ENCODE measurements at regions of chr4 and their contacts with region 1.

Region 1: DNA sequence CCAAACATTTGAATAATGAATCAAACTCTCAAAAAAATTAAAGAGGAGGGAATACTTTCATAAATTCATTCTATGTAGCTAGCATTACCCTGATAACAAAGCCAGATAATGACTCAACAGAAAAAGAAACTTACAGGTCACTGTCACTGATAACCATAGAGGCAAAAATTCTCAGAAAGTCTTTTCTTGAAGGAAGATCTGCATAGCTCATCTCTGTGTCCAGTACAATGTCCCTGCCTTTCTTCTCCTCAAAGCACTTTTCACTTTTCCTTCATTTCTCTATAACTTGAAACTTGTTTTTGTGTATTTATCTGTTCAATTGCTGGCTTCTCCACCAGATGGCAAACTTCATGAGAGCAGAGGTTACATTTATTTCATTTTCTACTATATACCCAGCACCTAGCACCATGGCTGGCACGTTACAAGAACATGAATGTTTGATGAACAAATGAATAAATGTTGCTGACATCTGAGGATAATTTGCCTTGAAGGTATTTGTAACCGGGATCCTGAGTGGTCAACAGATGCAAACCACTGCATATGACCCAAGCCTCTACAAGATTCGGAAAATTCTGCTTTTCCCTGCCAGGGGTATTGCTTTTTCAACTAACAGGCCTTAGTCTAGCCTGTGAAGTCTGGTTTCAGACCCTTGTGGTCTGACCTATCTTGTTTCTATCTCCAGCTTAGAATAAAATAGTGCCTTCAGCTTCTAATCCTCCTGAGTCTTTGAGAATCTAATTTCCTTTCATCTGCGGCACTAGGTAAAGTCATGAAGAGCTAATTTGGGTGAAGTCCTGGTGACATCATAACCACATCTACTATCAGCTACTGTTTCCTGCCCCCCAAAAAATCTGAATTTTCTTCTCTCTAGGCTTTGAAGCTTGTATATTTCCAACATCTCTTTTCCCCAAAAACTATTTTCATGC is 52.5 kb upstream of the ANTXR2 start:
- DNase-seq: peak; percentile 74
- ATAC-seq: peak; percentile 83
- H3K4me3 ChIP-seq: no peak overlapping the region
- H3K4me3 Mint-ChIP-seq: no peak overlapping the region
- H3K27ac ChIP-seq: no peak overlapping the region
- H3K27ac Mint-ChIP-seq: no peak overlapping the region
- H3K4me1 ChIP-seq: peaks cover 9 to 13% of the 10 kb centered on the region in 2 donors
- H3K4me1 Mint-ChIP-seq: peaks cover 21% of the 10 kb centered on the region
- H3K27me3 ChIP-seq: no peaks in the 10 kb centered on the region
- H3K27me3 Mint-ChIP-seq: no peaks in the 10 kb centered on the region
- CTCF ChIP-seq: peak; percentile 79

Region 2: GRCh38 chr4:78923464-78924312 is 1201.8 kb before region 1 on chr4:
- CTCF ChIA-PET with region 1: no interaction called
- POLR2A ChIA-PET with region 1: no interaction called
- intact Hi-C with region 1: no loop called
- DNase-seq: no peak
- ATAC-seq: no peak
- H3K4me3 ChIP-seq: no peak overlapping the region
- H3K4me3 Mint-ChIP-seq: no peak overlapping the region
- H3K27ac ChIP-seq: no peak overlapping the region
- H3K27ac Mint-ChIP-seq: no peak overlapping the region
- H3K4me1 ChIP-seq: no peaks in the 10 kb centered on the region
- H3K4me1 Mint-ChIP-seq: peaks cover 7% of the 10 kb centered on the region
- H3K27me3 ChIP-seq: no peaks in the 10 kb centered on the region
- H3K27me3 Mint-ChIP-seq: no peaks in the 10 kb centered on the region
- CTCF ChIP-seq: no peak

Region 3: DNA sequence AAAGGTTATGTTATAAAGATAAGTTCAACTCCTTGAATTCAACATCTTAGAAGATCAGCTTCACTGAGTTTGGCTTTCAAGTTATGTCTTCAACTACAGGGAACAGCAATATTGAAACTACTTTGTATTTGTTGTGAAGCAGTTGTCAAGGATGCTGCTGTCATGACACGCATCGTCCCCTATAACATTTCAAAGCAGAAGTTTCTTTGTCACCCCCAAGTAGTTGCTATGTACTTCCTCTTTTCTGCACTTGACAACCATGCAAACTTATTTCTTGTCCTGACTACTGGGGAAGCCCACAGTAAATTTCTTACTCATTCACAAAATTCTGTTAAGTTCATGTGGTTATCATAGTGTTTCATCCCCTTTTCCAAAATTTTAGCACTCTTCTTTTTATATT is 66.8 kb before region 1 on chr4:
- CTCF ChIA-PET with region 1: interaction called, 9 read pairs
- POLR2A ChIA-PET with region 1: no interaction called
- intact Hi-C with region 1: loop called (anchors 1 kb)
- DNase-seq: peak; percentile 94
- ATAC-seq: peak; percentile 93
- H3K4me3 ChIP-seq: peak overlapping the region in 2 of 5 experiments; percentile 10 to 33
- H3K4me3 Mint-ChIP-seq: peak overlapping the region; percentile 79
- H3K27ac ChIP-seq: peak overlapping the region; percentile 91 to 100
- H3K27ac Mint-ChIP-seq: peak overlapping the region; percentile 98
- H3K4me1 ChIP-seq: peaks cover 14 to 17% of the 10 kb centered on the region in 2 donors
- H3K4me1 Mint-ChIP-seq: peaks cover 36% of the 10 kb centered on the region
- H3K27me3 ChIP-seq: no peaks in the 10 kb centered on the region
- H3K27me3 Mint-ChIP-seq: no peaks in the 10 kb centered on the region
- CTCF ChIP-seq: no peak

Region 4: DNA sequence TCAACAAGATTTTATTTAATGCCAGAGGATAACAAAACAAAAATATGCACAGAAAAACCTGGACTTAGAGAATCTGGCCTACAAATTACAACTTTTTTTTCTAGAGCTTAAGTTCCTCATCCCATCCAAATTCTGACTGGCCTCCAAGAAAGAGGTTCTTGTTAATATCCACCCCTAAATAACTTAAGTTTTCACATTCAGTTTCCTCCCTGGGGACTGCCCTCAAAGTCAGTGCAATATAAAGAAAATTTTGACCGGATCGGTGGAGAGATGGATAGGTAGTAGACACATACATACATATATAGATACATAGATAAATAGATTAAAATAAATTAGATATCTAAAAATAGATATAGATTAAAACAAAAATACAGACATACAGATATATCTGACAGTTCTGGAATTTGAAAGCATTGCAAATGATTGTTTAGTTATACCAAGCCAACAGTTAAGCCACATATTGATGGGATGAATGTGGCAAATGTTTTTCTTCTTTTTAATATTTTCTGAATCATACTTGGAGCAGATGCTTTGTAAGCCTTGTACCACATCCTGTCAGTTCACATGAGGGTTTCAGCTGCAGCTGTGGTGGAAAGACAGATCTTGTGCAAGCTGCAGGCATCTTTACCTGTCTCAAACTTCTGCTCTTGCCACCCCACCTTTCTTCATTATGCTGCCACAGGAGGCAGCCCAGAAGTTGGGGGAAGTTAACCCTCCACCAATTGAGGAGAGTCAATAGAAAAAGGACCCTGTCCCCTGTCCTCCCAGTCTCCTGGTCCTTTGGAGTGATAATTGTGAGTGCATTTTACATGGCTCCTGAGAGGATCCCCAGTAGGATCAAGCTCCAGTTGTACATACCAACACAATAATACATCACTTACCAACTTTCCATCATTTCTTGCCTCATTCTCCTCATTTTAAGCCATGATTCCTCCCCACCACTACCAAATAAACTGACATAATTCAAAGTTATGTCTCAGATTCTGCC is 13.3 kb after region 1 on chr4:
- CTCF ChIA-PET with region 1: interaction called, 16 read pairs
- POLR2A ChIA-PET with region 1: no interaction called
- intact Hi-C with region 1: loop called (anchors 2 kb)
- DNase-seq: peak; percentile 39
- ATAC-seq: peak; percentile 66
- H3K4me3 ChIP-seq: no peak overlapping the region
- H3K4me3 Mint-ChIP-seq: peak overlapping the region; percentile 7
- H3K27ac ChIP-seq: no peak overlapping the region
- H3K27ac Mint-ChIP-seq: peak overlapping the region; percentile 34
- H3K4me1 ChIP-seq: peaks cover 12 to 29% of the 10 kb centered on the region in 2 donors
- H3K4me1 Mint-ChIP-seq: peaks cover 35% of the 10 kb centered on the region
- H3K27me3 ChIP-seq: no peaks in the 10 kb centered on the region
- H3K27me3 Mint-ChIP-seq: no peaks in the 10 kb centered on the region
- CTCF ChIP-seq: no peak

Region 5: DNA sequence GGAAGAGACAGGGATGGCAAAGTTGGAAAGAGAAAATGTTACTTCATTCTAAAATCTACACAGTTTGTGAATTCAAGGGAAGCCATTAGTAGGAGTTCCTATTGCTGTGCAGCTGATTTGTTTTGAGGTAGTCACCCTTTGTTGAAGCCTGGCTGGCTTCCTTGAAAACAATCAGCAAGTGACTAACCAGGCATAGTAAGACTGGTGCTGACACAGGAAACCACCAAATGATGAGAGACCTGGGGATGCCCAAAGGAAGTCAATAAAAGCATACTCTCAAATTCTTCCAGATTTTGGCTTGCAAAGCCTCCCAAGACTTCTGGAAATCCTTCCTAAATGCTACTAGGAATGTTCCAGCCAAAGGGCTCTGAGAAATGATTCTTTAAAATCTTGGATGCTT is 47.9 kb after region 1 on chr4:
- CTCF ChIA-PET with region 1: interaction called, 199 read pairs
- POLR2A ChIA-PET with region 1: interaction called, 8 read pairs
- intact Hi-C with region 1: loop called (anchors 2 kb)
- DNase-seq: peak; percentile 82
- ATAC-seq: peak; percentile 93
- H3K4me3 ChIP-seq: peak overlapping the region in 1 of 5 experiments; percentile 47
- H3K4me3 Mint-ChIP-seq: peak overlapping the region; percentile 87
- H3K27ac ChIP-seq: peak overlapping the region; percentile 80 to 84
- H3K27ac Mint-ChIP-seq: peak overlapping the region; percentile 98
- H3K4me1 ChIP-seq: peaks cover 41 to 42% of the 10 kb centered on the region in 2 donors
- H3K4me1 Mint-ChIP-seq: peaks cover 60% of the 10 kb centered on the region
- H3K27me3 ChIP-seq: no peaks in the 10 kb centered on the region
- H3K27me3 Mint-ChIP-seq: no peaks in the 10 kb centered on the region
- CTCF ChIP-seq: no peak

Region 6: GRCh38 chr4:80196922-80197573 is 71.5 kb after region 1 on chr4 and contains the start of gene PRDM8:
- CTCF ChIA-PET with region 1: interaction called, 53 read pairs
- POLR2A ChIA-PET with region 1: no interaction called
- intact Hi-C with region 1: loop called (anchors 1 kb)
- DNase-seq: peak; percentile 63
- ATAC-seq: peak; percentile 31
- H3K4me3 ChIP-seq: peak within 1 kb of the TSS; percentile 8 to 58 (median 41)
- H3K4me3 Mint-ChIP-seq: peak within 1 kb of the TSS; percentile 79
- H3K27ac ChIP-seq: no peak within 1 kb of the TSS
- H3K27ac Mint-ChIP-seq: peak within 1 kb of the TSS; percentile 72
- H3K4me1 ChIP-seq: peaks cover 33 to 37% of the 10 kb centered on the region in 2 donors
- H3K4me1 Mint-ChIP-seq: peaks cover 40% of the 10 kb centered on the region
- H3K27me3 ChIP-seq: peaks cover 0 to 54% (median 12%) of the 10 kb centered on the region in 4 experiments
- H3K27me3 Mint-ChIP-seq: peaks cover 23% of the 10 kb centered on the region
- CTCF ChIP-seq: no peak
- total RNA-seq, gene PRDM8: 30.1 and 35.6 TPM in 2 replicates

Region 7: GRCh38 chr4:80215449-80216052 is 90.0 kb after region 1 on chr4:
- CTCF ChIA-PET with region 1: interaction called, 38 read pairs
- POLR2A ChIA-PET with region 1: no interaction called
- intact Hi-C with region 1: loop called (anchors 1 kb)
- DNase-seq: peak; percentile 54
- ATAC-seq: peak; percentile 33
- H3K4me3 ChIP-seq: no peak overlapping the region
- H3K4me3 Mint-ChIP-seq: no peak overlapping the region
- H3K27ac ChIP-seq: no peak overlapping the region
- H3K27ac Mint-ChIP-seq: no peak overlapping the region
- H3K4me1 ChIP-seq: no peaks in the 10 kb centered on the region
- H3K4me1 Mint-ChIP-seq: peaks cover 1% of the 10 kb centered on the region
- H3K27me3 ChIP-seq: peaks cover 0 to 9% (median 3%) of the 10 kb centered on the region in 4 experiments
- H3K27me3 Mint-ChIP-seq: peaks cover 20% of the 10 kb centered on the region
- CTCF ChIP-seq: peak; percentile 84

Region 8: DNA sequence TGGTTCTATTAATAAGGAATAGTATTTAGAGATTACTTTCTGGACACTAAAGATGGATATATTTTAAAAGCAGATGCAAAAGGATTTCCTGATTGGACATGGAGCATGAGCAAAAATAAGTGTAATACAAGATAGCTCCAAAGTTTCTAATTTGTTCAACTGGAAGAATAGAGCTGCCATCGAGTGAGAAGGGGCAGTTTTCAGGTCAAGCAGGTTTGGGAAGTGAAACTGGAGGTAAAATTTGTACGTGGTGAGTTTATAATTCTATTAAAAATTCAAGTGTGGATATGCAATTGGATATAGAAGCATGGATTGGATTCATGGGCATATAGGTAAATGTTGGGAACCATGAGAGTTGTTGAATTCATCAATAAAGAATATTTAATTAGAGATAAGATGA is 103.6 kb after region 1 on chr4:
- CTCF ChIA-PET with region 1: interaction called, 10 read pairs
- POLR2A ChIA-PET with region 1: no interaction called
- intact Hi-C with region 1: no loop called
- DNase-seq: no peak
- ATAC-seq: no peak
- H3K4me3 ChIP-seq: no peak overlapping the region
- H3K4me3 Mint-ChIP-seq: no peak overlapping the region
- H3K27ac ChIP-seq: no peak overlapping the region
- H3K27ac Mint-ChIP-seq: no peak overlapping the region
- H3K4me1 ChIP-seq: no peaks in the 10 kb centered on the region
- H3K4me1 Mint-ChIP-seq: peaks cover 2% of the 10 kb centered on the region
- H3K27me3 ChIP-seq: peaks cover 0 to 9% (median 0%) of the 10 kb centered on the region in 4 experiments
- H3K27me3 Mint-ChIP-seq: peaks cover 14% of the 10 kb centered on the region
- CTCF ChIP-seq: no peak